Calu3 (cell line): ENCODE measurements at regions of chr16 and their contacts with region 1.

Region 1: GRCh38 chr16:87278191-87279095 is 38.7 kb downstream of the C16orf95 start:
- DNase-seq: peak; percentile 90
- H3K4me3 Mint-ChIP-seq: peak overlapping the region; percentile 57
- H3K27ac Mint-ChIP-seq: no peak overlapping the region
- H3K4me1 Mint-ChIP-seq: peaks cover 13% of the 10 kb centered on the region
- H3K27me3 Mint-ChIP-seq: peaks cover 66% of the 10 kb centered on the region
- CTCF ChIP-seq: peak; percentile 93

Region 2: DNA sequence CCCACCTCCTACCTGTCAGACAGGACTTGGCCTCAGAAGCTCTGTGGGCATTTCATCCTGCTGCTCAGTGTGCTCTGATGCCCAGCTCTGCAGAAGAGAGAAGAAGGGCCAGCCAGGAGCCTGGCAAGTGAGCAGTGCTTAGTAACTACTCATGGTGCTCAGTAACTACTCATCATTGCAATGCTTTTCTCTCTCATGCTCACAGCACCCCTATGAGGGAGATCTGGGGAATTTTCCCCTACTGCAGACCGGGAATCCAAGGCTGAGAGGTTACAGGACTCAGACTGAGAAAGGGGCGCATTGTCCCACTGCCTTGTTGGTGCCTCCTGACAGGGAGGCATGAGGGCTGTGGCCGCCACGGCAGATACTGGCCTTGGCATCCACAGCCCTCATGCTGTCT is 222.4 kb before region 1 on chr16:
- CTCF ChIA-PET with region 1: no interaction called
- intact Hi-C with region 1: no loop called
- DNase-seq: no peak
- H3K4me3 Mint-ChIP-seq: no peak overlapping the region
- H3K27ac Mint-ChIP-seq: no peak overlapping the region
- H3K4me1 Mint-ChIP-seq: no peaks in the 10 kb centered on the region
- H3K27me3 Mint-ChIP-seq: peaks cover 94% of the 10 kb centered on the region
- CTCF ChIP-seq: no peak

Region 3: GRCh38 chr16:87203060-87203656 is 75.3 kb before region 1 on chr16:
- CTCF ChIA-PET with region 1: interaction called, 27 read pairs
- intact Hi-C with region 1: loop called (anchors 1 kb)
- DNase-seq: peak; percentile 88
- H3K4me3 Mint-ChIP-seq: no peak overlapping the region
- H3K27ac Mint-ChIP-seq: no peak overlapping the region
- H3K4me1 Mint-ChIP-seq: peaks cover 11% of the 10 kb centered on the region
- H3K27me3 Mint-ChIP-seq: peaks cover 92% of the 10 kb centered on the region
- CTCF ChIP-seq: peak; percentile 92